Naive thymus-derived CD4-positive, alpha-beta T cell (primary cell): ENCODE measurements at regions of chr9 and their contacts with region 1.

Region 1: DNA sequence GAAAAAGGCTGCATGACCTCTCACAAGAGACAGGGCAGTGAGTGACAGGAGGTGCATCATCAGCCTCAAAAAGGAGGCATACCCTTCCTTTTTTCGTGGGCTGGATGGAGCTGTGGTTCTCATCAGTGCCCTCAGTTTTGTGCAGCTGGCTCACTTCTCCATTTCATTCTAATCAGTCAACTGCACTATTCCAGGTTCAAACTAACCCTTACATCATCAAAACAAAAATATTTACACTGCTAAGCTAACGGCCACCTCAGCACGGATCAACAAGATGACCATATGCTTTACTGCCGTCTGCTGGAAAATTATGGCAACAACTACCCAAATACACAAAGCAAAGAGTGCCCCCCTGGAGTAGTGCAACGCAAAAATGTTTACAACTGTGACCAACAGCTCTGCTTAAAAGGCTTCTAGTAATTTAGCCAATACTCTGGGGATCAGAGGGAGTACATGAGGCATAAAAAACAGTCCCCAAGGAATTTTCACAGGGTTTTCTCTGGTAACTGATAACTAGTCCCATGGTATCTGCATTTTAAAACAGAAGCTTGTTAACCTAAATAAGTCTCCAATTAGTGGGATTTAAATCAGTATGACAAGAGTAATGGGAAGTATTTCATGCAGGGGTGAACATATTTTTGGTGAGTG is 10.8 kb downstream of the KCNV2 start:
- DNase-seq: no peak
- ATAC-seq: peak; percentile 42
- H3K4me3 ChIP-seq: no peak overlapping the region
- H3K4me3 Mint-ChIP-seq: no peak overlapping the region
- H3K27ac ChIP-seq: no peak overlapping the region
- H3K27ac Mint-ChIP-seq: peak overlapping the region in 1 of 9 donors; percentile 59
- H3K4me1 ChIP-seq: no peaks in the 10 kb centered on the region
- H3K4me1 Mint-ChIP-seq: peaks cover 0 to 4% (median 0%) of the 10 kb centered on the region in 7 donors
- H3K27me3 ChIP-seq: no peaks in the 10 kb centered on the region
- H3K27me3 Mint-ChIP-seq: no peaks in the 10 kb centered on the region

Region 2: GRCh38 chr9:2132484-2133082 is 595.5 kb before region 1 on chr9:
- CTCF ChIA-PET with region 1: no interaction called
- POLR2A ChIA-PET with region 1: no interaction called
- intact Hi-C with region 1: loop called in 1 of 2 experiments (anchors 5 kb)
- DNase-seq: peak in 3 of 9 donors; percentile 12 to 19 (median 13)
- ATAC-seq: no peak
- H3K4me3 ChIP-seq: no peak overlapping the region
- H3K4me3 Mint-ChIP-seq: peak overlapping the region in 1 of 10 donors; percentile 26
- H3K27ac ChIP-seq: no peak overlapping the region
- H3K27ac Mint-ChIP-seq: peak overlapping the region in 2 of 9 donors; percentile 9 to 59
- H3K4me1 ChIP-seq: no peaks in the 10 kb centered on the region
- H3K4me1 Mint-ChIP-seq: peaks cover 8 to 64% (median 55%) of the 10 kb centered on the region in 7 donors
- H3K27me3 ChIP-seq: no peaks in the 10 kb centered on the region
- H3K27me3 Mint-ChIP-seq: no peaks in the 10 kb centered on the region

Region 3: GRCh38 chr9:2228132-2228531 is 500.0 kb before region 1 on chr9:
- CTCF ChIA-PET with region 1: no interaction called
- POLR2A ChIA-PET with region 1: no interaction called
- intact Hi-C with region 1: loop called in 1 of 2 experiments (anchors 5 kb)
- DNase-seq: no peak
- ATAC-seq: no peak
- H3K4me3 ChIP-seq: no peak overlapping the region
- H3K4me3 Mint-ChIP-seq: no peak overlapping the region
- H3K27ac ChIP-seq: no peak overlapping the region
- H3K27ac Mint-ChIP-seq: no peak overlapping the region
- H3K4me1 ChIP-seq: no peaks in the 10 kb centered on the region
- H3K4me1 Mint-ChIP-seq: peaks cover 0 to 13% (median 0%) of the 10 kb centered on the region in 7 donors
- H3K27me3 ChIP-seq: no peaks in the 10 kb centered on the region
- H3K27me3 Mint-ChIP-seq: peaks cover 0 to 3% (median 0%) of the 10 kb centered on the region in 5 donors

Region 4: GRCh38 chr9:2620919-2621679 is 107.0 kb before region 1 on chr9:
- CTCF ChIA-PET with region 1: no interaction called
- POLR2A ChIA-PET with region 1: no interaction called
- intact Hi-C with region 1: loop called in 1 of 2 experiments (anchors 5 kb)
- DNase-seq: peak in 2 of 9 donors; percentile 7 to 65
- ATAC-seq: peak; percentile 54
- H3K4me3 ChIP-seq: no peak overlapping the region
- H3K4me3 Mint-ChIP-seq: peak overlapping the region; percentile 57 to 89 (median 77)
- H3K27ac ChIP-seq: no peak overlapping the region
- H3K27ac Mint-ChIP-seq: peak overlapping the region in 1 of 9 donors; percentile 82
- H3K4me1 ChIP-seq: peaks cover 0 to 7% of the 10 kb centered on the region in 2 donors
- H3K4me1 Mint-ChIP-seq: peaks cover 12 to 30% (median 21%) of the 10 kb centered on the region in 7 donors
- H3K27me3 ChIP-seq: peaks cover 0 to 9% of the 10 kb centered on the region in 2 donors
- H3K27me3 Mint-ChIP-seq: peaks cover 50 to 73% (median 65%) of the 10 kb centered on the region in 5 donors

Region 5: GRCh38 chr9:2676466-2676865 is 51.6 kb before region 1 on chr9:
- CTCF ChIA-PET with region 1: no interaction called
- POLR2A ChIA-PET with region 1: no interaction called
- intact Hi-C with region 1: no loop called
- DNase-seq: no peak
- ATAC-seq: no peak
- H3K4me3 ChIP-seq: no peak overlapping the region
- H3K4me3 Mint-ChIP-seq: no peak overlapping the region
- H3K27ac ChIP-seq: no peak overlapping the region
- H3K27ac Mint-ChIP-seq: no peak overlapping the region
- H3K4me1 ChIP-seq: no peaks in the 10 kb centered on the region
- H3K4me1 Mint-ChIP-seq: no peaks in the 10 kb centered on the region
- H3K27me3 ChIP-seq: peaks cover 0 to 2% of the 10 kb centered on the region in 2 donors
- H3K27me3 Mint-ChIP-seq: peaks cover 0 to 3% (median 0%) of the 10 kb centered on the region in 5 donors

Region 6: DNA sequence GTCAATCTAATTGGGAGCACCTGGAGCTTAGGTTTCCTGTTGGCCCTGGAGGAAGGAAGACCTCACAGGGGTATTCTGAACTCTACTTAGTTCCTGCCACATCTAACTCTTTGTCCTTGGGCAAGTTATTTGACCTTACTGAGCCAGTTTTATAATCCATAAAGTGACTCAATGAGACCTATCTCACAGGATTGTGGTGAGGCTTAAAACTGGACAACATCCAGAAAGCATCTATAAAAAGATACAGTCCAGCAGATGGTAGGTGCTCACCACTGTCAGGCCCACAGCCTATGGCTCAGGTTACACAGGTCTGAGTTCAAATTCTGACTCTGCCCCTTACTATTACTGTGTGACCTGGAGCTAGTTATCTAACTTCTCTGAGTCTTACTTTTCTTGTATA is 12.5 kb after region 1 on chr9:
- CTCF ChIA-PET with region 1: no interaction called
- POLR2A ChIA-PET with region 1: no interaction called
- intact Hi-C with region 1: no loop called
- DNase-seq: no peak
- ATAC-seq: no peak
- H3K4me3 ChIP-seq: no peak overlapping the region
- H3K4me3 Mint-ChIP-seq: no peak overlapping the region
- H3K27ac ChIP-seq: no peak overlapping the region
- H3K27ac Mint-ChIP-seq: no peak overlapping the region
- H3K4me1 ChIP-seq: no peaks in the 10 kb centered on the region
- H3K4me1 Mint-ChIP-seq: peaks cover 0 to 4% (median 0%) of the 10 kb centered on the region in 7 donors
- H3K27me3 ChIP-seq: no peaks in the 10 kb centered on the region
- H3K27me3 Mint-ChIP-seq: no peaks in the 10 kb centered on the region